CD4-positive, alpha-beta memory T cell (primary cell): ENCODE measurements at regions of chr6 and their contacts with region 1.

Region 1: GRCh38 chr6:144582939-144583613 is 297.9 kb downstream of the UTRN start:
- DNase-seq: peak; percentile 57 to 75 (median 66)
- H3K4me3 ChIP-seq: peak overlapping the region; percentile 7 to 36
- H3K4me3 Mint-ChIP-seq: peak overlapping the region; percentile 76 to 91 (median 88)
- H3K27ac ChIP-seq: no peak overlapping the region
- H3K27ac Mint-ChIP-seq: peak overlapping the region; percentile 71 to 93 (median 84)
- H3K4me1 ChIP-seq: peaks cover 27% of the 10 kb centered on the region
- H3K4me1 Mint-ChIP-seq: peaks cover 25 to 44% (median 33%) of the 10 kb centered on the region in 4 donors
- H3K27me3 ChIP-seq: no peaks in the 10 kb centered on the region
- H3K27me3 Mint-ChIP-seq: no peaks in the 10 kb centered on the region

Region 2: DNA sequence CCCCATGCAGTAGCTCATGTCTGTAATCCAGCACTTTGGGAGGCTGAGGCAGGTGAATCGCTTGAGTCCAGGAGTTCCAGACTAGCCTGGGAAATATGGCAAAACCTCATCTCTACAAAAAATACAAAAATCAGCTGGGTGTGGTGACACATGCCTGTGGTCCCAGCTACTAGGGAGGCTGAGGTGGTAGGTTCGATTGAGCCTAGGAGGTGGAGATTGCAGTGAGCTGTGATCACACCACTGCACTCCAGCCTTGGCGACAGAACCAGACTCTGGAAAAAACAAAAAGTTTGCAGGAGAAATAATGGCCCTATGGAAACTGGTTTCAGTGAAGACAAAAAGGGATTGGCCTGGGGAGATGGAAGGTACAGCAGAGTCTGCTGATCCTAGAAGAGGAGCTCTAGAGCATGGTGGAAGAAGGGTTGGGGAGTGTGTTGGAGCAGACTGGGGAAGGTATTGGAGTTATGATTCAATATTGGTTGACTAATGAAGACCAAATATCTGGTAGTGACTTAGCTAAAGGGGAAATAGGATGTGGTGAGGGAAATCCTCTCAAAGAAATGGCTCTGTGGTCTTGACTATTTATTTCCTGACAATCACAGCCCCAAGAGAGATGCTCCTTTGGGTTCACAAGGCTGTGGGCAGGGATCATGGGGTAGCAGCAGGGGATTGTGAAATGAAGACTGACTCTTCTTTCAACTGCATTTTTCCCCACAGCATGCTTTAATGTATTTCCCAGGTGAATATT is 16.0 kb before region 1 on chr6:
- CTCF ChIA-PET with region 1: interaction called, 15 read pairs
- POLR2A ChIA-PET with region 1: interaction called, 5 read pairs
- intact Hi-C with region 1: loop called (anchors 1 kb)
- DNase-seq: peak in 3 of 5 donors; percentile 10 to 34 (median 23)
- H3K4me3 ChIP-seq: no peak overlapping the region
- H3K4me3 Mint-ChIP-seq: no peak overlapping the region
- H3K27ac ChIP-seq: no peak overlapping the region
- H3K27ac Mint-ChIP-seq: no peak overlapping the region
- H3K4me1 ChIP-seq: peaks cover 27% of the 10 kb centered on the region
- H3K4me1 Mint-ChIP-seq: peaks cover 0 to 16% (median 6%) of the 10 kb centered on the region in 4 donors
- H3K27me3 ChIP-seq: no peaks in the 10 kb centered on the region
- H3K27me3 Mint-ChIP-seq: no peaks in the 10 kb centered on the region

Region 3: DNA sequence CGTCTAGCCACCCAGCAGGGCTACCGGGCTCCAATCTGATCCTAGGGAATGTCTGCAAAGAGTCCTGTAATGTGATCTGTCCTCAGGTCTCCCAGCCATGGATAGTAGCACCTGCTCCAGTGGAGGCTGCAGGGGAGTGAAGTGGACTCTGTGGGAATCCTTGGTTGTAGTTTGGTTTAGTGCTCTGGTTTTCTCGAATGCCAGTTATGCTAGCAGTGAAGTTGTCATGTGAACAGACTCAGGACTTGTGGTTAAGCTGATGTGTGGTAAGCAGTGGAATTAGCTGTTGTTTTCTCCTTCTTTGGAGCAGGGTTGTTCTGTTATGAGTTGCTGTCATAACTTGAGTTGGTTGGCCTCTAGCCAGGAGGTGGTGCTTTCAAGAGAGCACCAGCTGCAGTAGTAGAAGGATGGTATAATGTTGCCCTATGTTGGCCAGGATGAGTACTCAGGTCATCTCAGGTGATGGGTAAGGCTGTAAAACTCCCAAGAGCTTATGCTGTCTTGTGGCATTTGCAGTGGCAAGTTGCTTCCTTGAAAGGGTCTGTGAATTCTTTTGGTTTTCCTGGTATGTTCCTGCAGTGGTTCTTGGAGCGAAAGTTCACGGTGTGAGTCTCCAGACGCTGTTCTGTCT is 92.3 kb after region 1 on chr6:
- CTCF ChIA-PET with region 1: no interaction called
- POLR2A ChIA-PET with region 1: no interaction called
- intact Hi-C with region 1: no loop called
- DNase-seq: peak; percentile 12 to 52 (median 37)
- H3K4me3 ChIP-seq: no peak overlapping the region
- H3K4me3 Mint-ChIP-seq: peak overlapping the region; percentile 11 to 55 (median 20)
- H3K27ac ChIP-seq: no peak overlapping the region
- H3K27ac Mint-ChIP-seq: peak overlapping the region; percentile 15 to 80 (median 66)
- H3K4me1 ChIP-seq: peaks cover 12% of the 10 kb centered on the region
- H3K4me1 Mint-ChIP-seq: peaks cover 24 to 58% (median 45%) of the 10 kb centered on the region in 4 donors
- H3K27me3 ChIP-seq: no peaks in the 10 kb centered on the region
- H3K27me3 Mint-ChIP-seq: no peaks in the 10 kb centered on the region

Region 4: GRCh38 chr6:144744720-144745119 is 161.6 kb after region 1 on chr6:
- CTCF ChIA-PET with region 1: no interaction called
- POLR2A ChIA-PET with region 1: no interaction called
- intact Hi-C with region 1: loop called (anchors 10 kb)
- DNase-seq: no peak
- H3K4me3 ChIP-seq: no peak overlapping the region
- H3K4me3 Mint-ChIP-seq: no peak overlapping the region
- H3K27ac ChIP-seq: no peak overlapping the region
- H3K27ac Mint-ChIP-seq: peak overlapping the region in 4 of 7 donors; percentile 32 to 63 (median 58)
- H3K4me1 ChIP-seq: no peaks in the 10 kb centered on the region
- H3K4me1 Mint-ChIP-seq: peaks cover 0 to 8% (median 7%) of the 10 kb centered on the region in 4 donors
- H3K27me3 ChIP-seq: no peaks in the 10 kb centered on the region
- H3K27me3 Mint-ChIP-seq: no peaks in the 10 kb centered on the region

Region 5: DNA sequence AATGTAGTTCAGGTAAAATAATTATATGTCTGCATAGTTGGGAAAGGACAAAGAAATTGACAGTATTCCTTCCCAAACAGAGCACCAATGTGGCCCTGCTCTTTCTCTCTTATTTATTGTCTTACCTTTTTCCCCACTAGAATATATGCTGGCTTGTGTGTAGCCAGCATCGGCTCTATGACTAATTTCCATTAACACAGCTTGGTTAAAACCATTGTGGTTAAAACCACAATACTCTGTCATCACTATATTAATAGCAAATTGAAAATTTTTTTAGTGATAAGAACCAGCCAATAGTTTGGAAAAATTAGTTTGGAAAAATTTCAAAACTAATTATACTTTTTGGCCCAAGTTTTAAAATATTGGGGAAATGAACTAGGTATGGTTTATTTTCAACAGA is 237.2 kb after region 1 on chr6:
- CTCF ChIA-PET with region 1: no interaction called
- POLR2A ChIA-PET with region 1: no interaction called
- intact Hi-C with region 1: loop called (anchors 10 kb)
- DNase-seq: no peak
- H3K4me3 ChIP-seq: no peak overlapping the region
- H3K4me3 Mint-ChIP-seq: no peak overlapping the region
- H3K27ac ChIP-seq: no peak overlapping the region
- H3K27ac Mint-ChIP-seq: peak overlapping the region in 1 of 7 donors; percentile 62
- H3K4me1 ChIP-seq: no peaks in the 10 kb centered on the region
- H3K4me1 Mint-ChIP-seq: peaks cover 0 to 7% (median 4%) of the 10 kb centered on the region in 4 donors
- H3K27me3 ChIP-seq: no peaks in the 10 kb centered on the region
- H3K27me3 Mint-ChIP-seq: no peaks in the 10 kb centered on the region

Region 6: DNA sequence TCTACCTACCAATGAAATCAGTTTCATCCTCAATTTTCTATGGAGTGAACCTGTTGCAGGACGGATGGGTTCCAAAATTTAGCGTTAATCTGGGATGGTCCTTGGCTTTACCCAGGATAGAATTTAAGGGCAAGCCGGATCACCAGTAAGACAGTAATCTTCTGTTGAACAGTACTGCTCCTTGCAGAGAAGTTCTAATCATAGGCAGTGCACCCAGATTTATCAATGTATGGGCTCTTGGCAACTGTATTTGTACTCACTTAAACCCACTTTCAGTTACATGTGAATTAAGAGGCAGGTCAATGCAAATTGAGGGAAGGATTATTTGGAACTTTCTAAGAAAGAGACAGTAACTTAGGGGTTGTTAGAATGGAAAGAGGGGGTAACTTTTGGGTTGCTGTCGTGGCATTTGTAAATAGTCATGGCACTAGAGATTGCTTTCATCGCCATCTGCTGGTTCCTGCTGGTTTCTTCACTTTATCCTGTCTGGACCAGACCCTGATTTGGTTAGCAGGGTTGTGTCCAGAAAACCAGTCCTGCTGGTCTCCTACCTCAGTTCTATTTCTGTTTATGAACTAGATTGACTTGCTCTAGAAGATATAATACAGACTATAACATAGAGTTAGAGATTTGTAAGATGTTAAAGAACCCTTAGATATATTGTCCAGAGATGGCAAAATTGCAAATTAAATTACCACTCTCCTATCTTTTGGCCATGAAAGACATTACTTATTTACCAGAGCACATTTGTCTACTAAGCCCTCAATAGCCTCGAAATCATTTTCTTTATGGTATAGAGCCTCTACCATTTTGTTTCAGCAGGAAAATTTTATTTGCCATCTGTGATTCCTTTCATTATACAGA is 348.3 kb after region 1 on chr6:
- CTCF ChIA-PET with region 1: interaction called, 3 read pairs
- POLR2A ChIA-PET with region 1: no interaction called
- intact Hi-C with region 1: loop called (anchors 1 kb)
- DNase-seq: peak in 4 of 5 donors; percentile 6 to 26 (median 18)
- H3K4me3 ChIP-seq: no peak overlapping the region
- H3K4me3 Mint-ChIP-seq: no peak overlapping the region
- H3K27ac ChIP-seq: no peak overlapping the region
- H3K27ac Mint-ChIP-seq: no peak overlapping the region
- H3K4me1 ChIP-seq: no peaks in the 10 kb centered on the region
- H3K4me1 Mint-ChIP-seq: no peaks in the 10 kb centered on the region
- H3K27me3 ChIP-seq: no peaks in the 10 kb centered on the region
- H3K27me3 Mint-ChIP-seq: peaks cover 3 to 8% of the 10 kb centered on the region in 2 donors

Region 7: GRCh38 chr6:145214570-145214969 is 631.5 kb after region 1 on chr6:
- CTCF ChIA-PET with region 1: interaction called, 4 read pairs
- POLR2A ChIA-PET with region 1: no interaction called
- intact Hi-C with region 1: loop called (anchors 1 kb)
- DNase-seq: peak in 4 of 5 donors; percentile 5 to 22 (median 14)
- H3K4me3 ChIP-seq: no peak overlapping the region
- H3K4me3 Mint-ChIP-seq: peak overlapping the region in 1 of 8 donors; percentile 27
- H3K27ac ChIP-seq: no peak overlapping the region
- H3K27ac Mint-ChIP-seq: no peak overlapping the region
- H3K4me1 ChIP-seq: no peaks in the 10 kb centered on the region
- H3K4me1 Mint-ChIP-seq: peaks cover 5 to 9% (median 8%) of the 10 kb centered on the region in 4 donors
- H3K27me3 ChIP-seq: no peaks in the 10 kb centered on the region
- H3K27me3 Mint-ChIP-seq: peaks cover 0 to 2% of the 10 kb centered on the region in 2 donors

Region 8: DNA sequence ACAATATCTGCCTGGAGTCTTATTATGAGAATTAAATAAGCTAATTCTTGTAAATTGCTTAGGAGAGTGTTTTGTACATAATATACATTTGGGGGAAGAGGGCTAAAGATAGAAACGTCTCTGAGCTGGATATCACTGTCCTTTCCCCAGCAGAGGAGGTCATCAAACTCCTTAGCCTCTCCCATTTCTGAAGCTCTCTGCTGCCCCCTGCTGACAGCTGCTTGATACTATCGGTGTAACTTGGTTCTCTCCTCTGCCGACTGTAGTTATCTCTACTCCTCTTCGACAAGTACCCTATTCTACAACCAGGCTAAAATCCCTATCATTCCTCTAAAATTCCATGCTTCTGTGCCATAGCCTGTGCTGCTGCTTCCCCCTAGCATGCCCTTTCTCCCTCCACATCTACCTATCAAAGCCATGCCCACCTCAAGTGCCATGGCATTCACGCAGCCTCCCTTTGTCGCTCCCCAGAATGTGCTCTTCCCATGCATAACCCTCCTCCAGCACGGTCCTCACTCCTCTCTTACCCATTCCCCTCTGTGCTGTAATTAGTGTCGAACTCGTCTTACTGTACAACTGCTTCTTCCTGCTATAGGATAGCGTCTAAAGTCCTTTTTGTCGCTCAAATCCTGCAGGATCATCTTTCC is 1051.0 kb after region 1 on chr6:
- CTCF ChIA-PET with region 1: interaction called, 6 read pairs
- POLR2A ChIA-PET with region 1: no interaction called
- intact Hi-C with region 1: loop called (anchors 5 kb)
- DNase-seq: peak; percentile 52 to 64 (median 61)
- H3K4me3 ChIP-seq: no peak overlapping the region
- H3K4me3 Mint-ChIP-seq: no peak overlapping the region
- H3K27ac ChIP-seq: no peak overlapping the region
- H3K27ac Mint-ChIP-seq: no peak overlapping the region
- H3K4me1 ChIP-seq: no peaks in the 10 kb centered on the region
- H3K4me1 Mint-ChIP-seq: peaks cover 1 to 8% (median 4%) of the 10 kb centered on the region in 4 donors
- H3K27me3 ChIP-seq: no peaks in the 10 kb centered on the region
- H3K27me3 Mint-ChIP-seq: no peaks in the 10 kb centered on the region